Sigmoid colon (tissue), 7 donors: ENCODE measurements at regions of chr6 and their contacts with region 1.

Region 1: DNA sequence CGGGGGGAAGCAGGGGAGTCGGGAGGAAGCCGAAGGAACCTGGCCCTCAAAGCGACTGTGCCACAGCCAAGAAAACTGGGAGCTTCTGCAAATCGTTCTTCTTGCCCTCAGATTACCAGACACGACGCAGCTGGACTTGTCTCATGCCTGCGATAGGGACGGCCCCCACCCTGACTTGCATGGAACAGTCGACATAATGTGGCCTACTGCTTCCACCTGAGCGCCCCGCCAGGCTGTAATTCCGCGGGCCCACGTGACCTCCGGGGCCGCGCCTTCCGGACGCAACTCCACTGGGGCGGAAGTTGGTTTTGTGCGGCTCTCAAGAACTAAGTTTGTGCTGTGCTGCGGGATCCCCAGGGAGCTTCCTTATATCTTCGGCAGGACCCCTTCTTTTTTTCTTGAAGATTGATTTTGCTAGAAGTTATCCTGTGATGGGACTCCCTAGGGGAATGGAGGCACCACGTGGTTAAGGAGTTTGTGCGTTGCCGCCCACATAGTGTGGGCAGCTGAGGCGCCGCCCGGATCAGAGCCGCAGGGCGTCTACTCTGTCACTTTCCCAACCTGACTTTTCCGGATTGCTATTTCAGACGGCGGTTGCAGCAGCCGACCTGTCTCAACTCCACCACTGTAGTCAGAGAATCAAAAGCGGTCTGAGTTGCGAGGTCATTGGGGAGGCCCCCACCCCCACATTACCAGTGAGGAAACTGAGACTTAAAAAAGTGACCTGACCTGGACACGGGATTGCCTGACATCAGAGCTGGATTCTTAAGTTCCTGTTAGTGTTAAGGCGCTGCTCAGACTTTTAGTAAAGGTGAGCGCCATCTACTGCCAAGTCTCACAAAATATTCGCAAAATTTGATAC is 540 bp upstream of the CD164 start:
- DNase-seq: peak; percentile 96
- H3K4me3 ChIP-seq: peak overlapping the region; percentile 70 to 99 (median 92)
- H3K27ac ChIP-seq: peak overlapping the region; percentile 93 to 100 (median 99)
- H3K4me1 ChIP-seq: peaks cover 0 to 41% (median 30%) of the 10 kb centered on the region in 4 donors
- H3K27me3 ChIP-seq: no peaks in the 10 kb centered on the region
- CTCF ChIP-seq: peak in 3 of 4 experiments; percentile 23 to 41 (median 38)
- EP300 ChIP-seq: peak in 1 of 4 donors; percentile 1
- POLR2A ChIP-seq: peak; percentile 4 to 14

Region 2: GRCh38 chr6:109095027-109095834 is 287.6 kb before region 1 on chr6 and contains the start of gene CEP57L1:
- intact Hi-C with region 1: loop called (anchors 5 kb)
- DNase-seq: peak; percentile 99
- H3K4me3 ChIP-seq: peak within 1 kb of the TSS; percentile 71 to 77 (median 74)
- H3K27ac ChIP-seq: peak within 1 kb of the TSS; percentile 97 to 99 (median 98)
- H3K4me1 ChIP-seq: peaks cover 0 to 38% (median 26%) of the 10 kb centered on the region in 4 donors
- H3K27me3 ChIP-seq: no peaks in the 10 kb centered on the region
- CTCF ChIP-seq: no peak
- EP300 ChIP-seq: peak in 1 of 4 donors; percentile 19
- POLR2A ChIP-seq: peak; percentile 23 to 65
- total RNA-seq, gene CEP57L1: 12.6 to 21.0 (median 16.5) TPM

Region 3: DNA sequence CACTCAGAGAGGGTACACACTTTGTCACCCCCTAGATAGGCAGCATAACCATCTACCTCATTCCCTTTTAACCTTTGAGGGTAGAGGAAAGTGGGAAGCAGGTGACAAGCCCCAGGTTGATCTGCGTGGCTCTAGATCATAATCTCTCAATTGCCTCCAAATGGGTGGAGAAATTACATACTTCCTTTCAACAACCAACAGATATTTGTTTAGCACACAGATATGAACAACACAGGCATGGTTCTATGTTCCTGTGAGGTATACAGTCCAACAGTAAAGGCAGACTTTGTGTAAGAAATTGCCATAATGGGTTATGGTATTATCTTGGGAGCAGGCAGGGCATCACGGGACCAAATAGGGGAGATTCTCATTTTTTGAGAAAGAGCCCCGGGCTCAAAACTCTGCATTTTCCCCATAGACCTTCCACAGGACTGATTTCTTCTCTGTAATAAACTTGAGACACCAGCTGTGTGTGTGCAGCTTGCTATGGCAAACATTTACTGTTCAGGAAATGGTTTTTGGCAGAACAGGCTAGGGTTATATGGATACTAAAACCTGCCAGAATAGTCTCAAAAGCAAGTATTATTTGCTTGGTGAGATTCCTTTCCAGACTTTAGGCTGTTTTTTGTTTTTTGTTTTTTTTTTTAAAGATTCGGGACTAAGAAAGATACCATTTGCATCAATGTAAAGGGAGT is 126.7 kb before region 1 on chr6:
- intact Hi-C with region 1: loop called (anchors 5 kb)
- DNase-seq: no peak
- H3K4me3 ChIP-seq: no peak overlapping the region
- H3K27ac ChIP-seq: no peak overlapping the region
- H3K4me1 ChIP-seq: peaks cover 0 to 38% (median 19%) of the 10 kb centered on the region in 4 donors
- H3K27me3 ChIP-seq: no peaks in the 10 kb centered on the region
- CTCF ChIP-seq: no peak
- EP300 ChIP-seq: no peak
- POLR2A ChIP-seq: no peak

Region 4: DNA sequence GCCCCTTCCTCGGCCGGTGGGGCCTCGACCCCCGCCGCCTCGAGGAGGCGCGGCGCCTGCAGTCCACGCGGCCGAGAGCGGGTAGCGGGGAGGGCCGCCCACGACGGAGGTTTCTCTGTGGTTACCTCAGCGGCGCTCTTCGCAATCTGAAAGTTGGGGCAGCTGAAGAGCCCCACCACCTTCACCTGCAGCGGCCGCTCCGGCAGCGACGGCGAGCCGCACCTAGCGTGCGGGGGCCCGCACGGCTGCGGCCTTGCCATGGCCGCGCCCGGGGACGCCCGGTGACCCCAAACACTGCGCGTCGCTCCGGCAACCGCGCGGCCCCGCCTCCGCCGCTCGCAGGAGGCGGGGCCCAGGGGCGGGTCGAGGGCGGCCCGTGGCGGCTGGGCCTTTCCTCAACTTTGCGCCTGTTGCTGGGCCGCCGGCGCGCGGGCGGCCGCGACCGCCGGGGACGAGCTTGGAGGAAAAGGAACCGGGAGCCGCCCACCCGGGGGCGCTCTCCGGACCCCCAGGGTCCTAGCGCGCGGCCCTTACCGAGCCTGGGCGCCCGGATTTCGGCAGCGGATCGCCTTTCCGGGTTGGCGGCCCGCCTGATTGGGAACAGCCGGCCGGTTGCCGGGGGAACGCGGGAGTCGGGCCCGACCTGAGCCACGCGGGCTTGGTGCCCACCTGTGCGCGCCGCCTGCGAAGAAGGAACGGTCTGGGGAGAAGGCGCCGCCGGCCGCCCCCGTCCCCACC is 57.7 kb after region 1 on chr6 and contains the starts of genes PPIL6 and SMPD2:
- intact Hi-C with region 1: loop called (anchors 1 kb)
- DNase-seq: peak; percentile 95
- H3K4me3 ChIP-seq: peak within 1 kb of the TSS; percentile 83 to 89 (median 86)
- H3K27ac ChIP-seq: peak within 1 kb of the TSS; percentile 82 to 90 (median 84)
- H3K4me1 ChIP-seq: peaks cover 0 to 30% (median 22%) of the 10 kb centered on the region in 4 donors
- H3K27me3 ChIP-seq: no peaks in the 10 kb centered on the region
- CTCF ChIP-seq: peak in 1 of 4 experiments; percentile 34
- EP300 ChIP-seq: no peak
- POLR2A ChIP-seq: no peak
- total RNA-seq, gene PPIL6: 1.4 to 10.2 (median 4.3) TPM
- total RNA-seq, gene SMPD2: 2.4 to 18.3 (median 6.6) TPM